ENCODE measurements at regions of chr3 and their contacts with region 1.

Region 1: DNA sequence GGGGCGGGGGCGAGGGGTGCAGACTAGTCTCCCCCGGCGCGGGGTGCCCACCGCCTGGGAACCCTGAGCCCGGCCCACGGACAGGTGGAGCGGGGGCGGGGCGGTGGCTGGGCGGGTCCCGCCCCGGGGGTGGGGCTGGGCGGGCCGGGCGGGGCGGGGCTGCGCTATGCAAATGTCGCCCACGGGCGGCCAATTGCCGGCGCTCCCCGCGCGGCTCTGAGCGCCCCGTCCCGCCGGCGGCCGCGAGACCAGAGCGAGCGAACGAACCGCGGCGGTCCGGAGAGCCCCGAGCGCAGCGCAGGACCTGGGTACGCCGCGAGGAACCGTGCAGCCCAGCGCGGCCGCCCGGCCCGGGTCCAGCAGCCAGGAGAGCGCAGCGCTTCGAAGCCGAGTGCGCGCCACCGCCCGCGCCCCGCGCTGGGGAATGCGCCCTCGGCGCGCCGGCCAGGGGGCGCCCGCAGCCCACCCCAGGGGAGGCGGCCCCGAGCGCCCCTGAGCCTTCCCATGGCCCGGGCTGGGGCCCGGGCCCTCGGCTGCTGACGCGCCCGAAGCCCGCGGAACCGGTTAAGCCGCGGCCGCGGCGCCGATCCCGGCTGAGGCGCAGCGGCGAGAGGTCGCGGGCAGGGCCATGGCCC is at the start of gene SEMA3F:
- DNase-seq: peak; percentile 79
- total RNA-seq, gene SEMA3F: 10.0 TPM

Region 2: GRCh38 chr3:49422379-49423248 is 732.3 kb before region 1 on chr3 and contains the start of gene AMT:
- intact Hi-C with region 1: no loop called
- DNase-seq: no peak
- total RNA-seq, gene AMT: 20.1 TPM

Region 3: DNA sequence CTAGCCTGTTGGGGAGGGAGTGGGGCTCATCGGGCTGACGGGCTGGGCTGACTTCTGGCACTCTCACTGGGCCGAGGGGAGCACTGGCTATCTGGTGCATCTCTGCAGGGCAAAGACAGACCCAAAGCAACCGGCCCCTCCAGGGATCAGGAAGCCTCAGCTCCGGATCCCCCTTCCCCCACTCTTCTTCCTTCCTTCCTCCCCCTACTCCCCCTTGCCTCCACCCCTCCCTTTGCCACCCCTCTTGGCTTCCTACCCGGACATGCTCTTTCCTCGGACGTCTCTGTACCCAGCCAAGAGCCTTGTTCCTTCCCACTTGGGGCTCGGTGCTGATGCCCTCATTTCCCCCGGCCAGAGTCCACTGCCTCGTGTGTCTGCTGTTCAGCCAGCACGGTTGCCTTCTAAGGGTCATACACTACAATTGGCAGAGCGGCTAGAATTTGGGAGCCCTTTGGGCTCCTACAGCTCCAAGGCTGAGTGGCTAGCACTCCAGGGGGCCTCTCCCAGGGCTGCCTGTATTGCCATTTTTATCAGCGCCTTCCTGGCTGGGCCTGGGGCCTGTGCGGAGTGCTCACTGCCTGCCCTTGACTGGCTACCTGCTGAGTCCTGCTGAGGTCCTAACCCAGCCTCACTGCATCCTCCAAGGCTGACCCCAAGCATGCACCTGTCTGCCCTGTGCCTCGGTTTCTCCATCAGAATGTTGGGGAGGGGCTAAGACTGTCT is 11.1 kb after region 1 on chr3:
- intact Hi-C with region 1: loop called (anchors 1 kb)
- DNase-seq: no peak

Region 4: DNA sequence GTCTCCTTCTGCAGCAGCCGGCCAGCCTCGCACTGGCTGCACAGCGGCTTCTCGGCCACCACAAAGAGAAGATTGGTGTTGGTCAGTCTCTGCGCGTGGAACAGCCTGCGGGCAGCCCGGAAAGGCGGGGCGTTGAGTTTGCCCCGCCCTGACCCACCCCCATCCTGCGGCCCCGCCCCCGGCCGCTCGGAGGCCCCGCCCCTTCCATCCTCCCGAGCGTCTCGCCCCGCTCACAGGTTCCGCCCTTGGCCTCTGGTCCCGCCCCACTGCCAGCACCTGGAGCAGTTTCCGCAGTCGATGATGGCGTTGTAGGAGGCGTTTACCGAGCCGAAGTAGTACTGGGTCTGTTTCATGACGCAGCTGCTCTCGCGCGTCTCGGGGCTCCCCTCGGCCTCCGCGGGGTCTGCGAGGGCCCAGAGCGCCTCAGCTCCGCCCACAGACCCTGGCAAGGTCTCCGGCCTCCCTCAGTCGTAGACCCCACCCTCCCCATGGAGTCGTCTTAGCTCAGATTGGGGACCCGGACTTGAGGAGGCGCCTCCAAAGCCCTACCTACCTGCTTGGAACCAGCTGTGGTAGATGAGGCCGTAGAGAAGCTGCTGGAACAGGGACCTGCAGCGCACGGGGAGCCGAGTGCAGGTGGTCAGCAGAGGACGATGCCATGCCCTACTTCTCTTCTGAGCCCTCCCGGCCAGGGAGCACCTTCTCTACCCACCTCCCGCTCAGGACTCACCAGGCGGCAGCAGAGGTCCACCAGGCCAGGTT is 210.3 kb after region 1 on chr3:
- intact Hi-C with region 1: no loop called
- DNase-seq: peak; percentile 95

Region 5: GRCh38 chr3:50786631-50787030 is 631.7 kb after region 1 on chr3:
- intact Hi-C with region 1: no loop called
- DNase-seq: no peak